Activated CD4-positive, alpha-beta memory T cell treated with anti-CD3 and anti-CD28 coated beads, Interleukin-2, amount 10 ng/mL, durations not matched to agents 7 days and 5 days (primary cell): ENCODE measurements at regions of chr14 and their contacts with region 1.

Region 1: DNA sequence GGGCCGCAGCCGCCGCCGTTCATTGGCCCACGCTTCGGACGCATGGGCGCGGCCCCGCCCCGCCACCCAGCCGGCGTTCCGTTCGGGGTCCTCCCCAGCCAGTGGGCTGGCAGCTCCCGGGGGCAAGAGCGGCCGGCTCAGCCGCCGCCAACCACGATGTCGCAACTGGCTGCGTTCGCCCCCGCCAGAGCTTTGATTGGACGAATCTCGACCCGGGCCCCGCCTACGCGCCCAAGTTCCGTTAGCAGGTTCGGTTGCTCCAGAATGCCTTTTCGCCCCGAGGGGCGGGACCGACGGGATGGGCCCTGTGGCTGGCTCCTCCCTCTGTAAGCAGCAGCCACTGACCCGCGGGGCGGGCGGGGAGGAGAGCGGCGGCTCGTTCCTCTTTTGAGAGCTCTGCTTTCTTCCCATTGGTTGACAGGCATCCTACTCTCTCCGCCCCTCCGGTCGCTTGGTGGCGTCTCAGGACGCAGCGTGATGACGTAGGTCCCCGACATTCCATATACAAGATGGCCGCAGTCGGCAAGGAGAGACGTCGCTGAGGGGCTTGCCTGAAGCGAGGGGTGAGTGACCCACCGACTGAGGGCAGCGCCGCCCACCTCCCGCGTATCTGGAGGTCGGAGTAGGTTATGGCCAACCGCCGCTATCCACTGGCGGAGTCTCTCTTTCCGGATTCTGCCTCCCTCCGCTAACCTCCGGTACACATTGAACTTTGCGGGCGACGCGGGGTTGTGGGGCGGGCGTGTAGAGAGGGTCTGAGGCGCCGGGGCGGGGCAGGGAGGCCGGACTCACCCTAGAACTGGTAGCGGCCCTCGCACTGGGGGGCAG is at the start of gene CCNK:
- DNase-seq: peak; percentile 100
- H3K4me3 Mint-ChIP-seq: peak within 1 kb of the TSS; percentile 96
- H3K27ac Mint-ChIP-seq: peak within 1 kb of the TSS; percentile 94
- H3K4me1 Mint-ChIP-seq: peaks cover 46% of the 10 kb centered on the region
- H3K27me3 Mint-ChIP-seq: no peaks in the 10 kb centered on the region
- total RNA-seq, gene CCNK: 79.2 to 83.7 TPM

Region 2: DNA sequence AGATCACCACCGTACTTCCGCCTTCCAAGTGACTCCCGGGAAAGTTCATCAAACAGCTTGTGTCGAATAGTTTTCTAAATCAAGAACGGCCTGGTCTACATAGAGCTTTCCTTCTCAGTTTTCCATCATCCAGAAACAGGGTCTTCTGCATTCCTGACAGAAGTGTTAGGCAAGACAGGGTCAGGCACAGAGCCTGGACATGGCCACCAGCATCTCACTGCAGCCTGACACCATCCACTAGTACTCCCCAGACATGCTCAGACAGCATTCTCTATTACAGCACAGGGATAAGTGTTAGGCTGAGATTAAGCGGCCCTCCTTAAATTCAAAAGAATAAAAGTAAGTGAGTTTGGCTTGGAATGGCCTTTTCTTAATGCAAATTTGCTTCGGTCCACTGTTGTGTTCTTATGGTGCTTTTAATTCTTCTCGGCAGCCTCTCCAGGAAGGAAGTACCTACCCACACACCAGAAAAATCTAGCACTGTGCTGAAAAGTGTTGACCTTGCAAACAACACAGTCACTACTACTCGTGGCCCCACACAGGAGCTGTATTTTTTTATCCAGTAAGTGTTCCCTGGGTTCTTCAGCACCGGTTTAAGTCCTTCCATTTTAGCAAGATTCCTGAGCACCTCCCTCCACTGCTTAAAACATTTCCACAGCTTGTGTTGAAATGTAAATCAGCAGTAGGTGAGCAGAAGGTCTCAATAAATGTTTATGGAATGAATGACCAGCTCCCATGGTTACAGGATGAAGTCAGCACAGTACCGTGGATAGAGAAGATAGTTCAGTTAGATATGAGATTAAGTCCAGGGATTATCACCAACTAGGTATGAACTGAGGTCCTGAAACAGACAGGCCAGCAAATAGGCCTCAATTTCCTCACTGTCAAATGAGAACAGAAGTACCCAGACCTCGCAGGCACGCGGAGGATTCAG is 44.6 kb before region 1 on chr14:
- CTCF ChIA-PET with region 1: interaction called, 3 read pairs
- POLR2A ChIA-PET with region 1: interaction called, 20 read pairs
- DNase-seq: peak; percentile 33
- H3K4me3 Mint-ChIP-seq: no peak overlapping the region
- H3K27ac Mint-ChIP-seq: peak overlapping the region; percentile 85
- H3K4me1 Mint-ChIP-seq: peaks cover 40% of the 10 kb centered on the region
- H3K27me3 Mint-ChIP-seq: no peaks in the 10 kb centered on the region

Region 3: DNA sequence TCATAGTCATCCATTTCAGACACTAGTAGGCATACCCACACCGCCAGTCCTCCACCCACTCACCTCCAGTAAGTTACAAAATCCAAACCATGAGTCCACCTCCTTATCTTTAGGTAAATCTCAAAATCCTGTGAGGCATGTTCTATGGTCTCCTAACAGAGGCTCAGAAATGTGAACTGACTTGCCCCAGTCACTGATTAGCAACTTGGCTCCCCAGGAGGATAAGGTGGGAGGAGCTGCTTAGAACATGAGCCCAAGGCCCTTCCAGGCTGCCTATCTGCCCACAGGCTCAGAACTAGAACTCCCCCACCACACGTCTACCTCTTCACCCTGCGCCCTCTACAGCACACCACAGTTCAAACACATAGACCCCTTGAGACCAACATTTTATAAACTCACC is 20.3 kb before region 1 on chr14:
- CTCF ChIA-PET with region 1: no interaction called
- POLR2A ChIA-PET with region 1: interaction called, 11 read pairs
- DNase-seq: no peak
- H3K4me3 Mint-ChIP-seq: no peak overlapping the region
- H3K27ac Mint-ChIP-seq: no peak overlapping the region
- H3K4me1 Mint-ChIP-seq: peaks cover 14% of the 10 kb centered on the region
- H3K27me3 Mint-ChIP-seq: no peaks in the 10 kb centered on the region